ENCODE measurements at regions of chr1 and their contacts with region 1.

Region 1: GRCh38 chr1:244272471-244273261 is 179.0 kb downstream of the ADSS2 start:
- DNase-seq: peak; percentile 50 to 82 (median 72)
- H3K4me3 ChIP-seq: peak overlapping the region in 12 of 59 donors; percentile 3 to 28 (median 16)
- H3K27ac ChIP-seq: peak overlapping the region in 58 of 59 donors; percentile 16 to 92 (median 81)
- H3K27me3 ChIP-seq: no peaks in the 10 kb centered on the region
- CTCF ChIP-seq: peak; percentile 91 to 100 (median 98)

Region 2: DNA sequence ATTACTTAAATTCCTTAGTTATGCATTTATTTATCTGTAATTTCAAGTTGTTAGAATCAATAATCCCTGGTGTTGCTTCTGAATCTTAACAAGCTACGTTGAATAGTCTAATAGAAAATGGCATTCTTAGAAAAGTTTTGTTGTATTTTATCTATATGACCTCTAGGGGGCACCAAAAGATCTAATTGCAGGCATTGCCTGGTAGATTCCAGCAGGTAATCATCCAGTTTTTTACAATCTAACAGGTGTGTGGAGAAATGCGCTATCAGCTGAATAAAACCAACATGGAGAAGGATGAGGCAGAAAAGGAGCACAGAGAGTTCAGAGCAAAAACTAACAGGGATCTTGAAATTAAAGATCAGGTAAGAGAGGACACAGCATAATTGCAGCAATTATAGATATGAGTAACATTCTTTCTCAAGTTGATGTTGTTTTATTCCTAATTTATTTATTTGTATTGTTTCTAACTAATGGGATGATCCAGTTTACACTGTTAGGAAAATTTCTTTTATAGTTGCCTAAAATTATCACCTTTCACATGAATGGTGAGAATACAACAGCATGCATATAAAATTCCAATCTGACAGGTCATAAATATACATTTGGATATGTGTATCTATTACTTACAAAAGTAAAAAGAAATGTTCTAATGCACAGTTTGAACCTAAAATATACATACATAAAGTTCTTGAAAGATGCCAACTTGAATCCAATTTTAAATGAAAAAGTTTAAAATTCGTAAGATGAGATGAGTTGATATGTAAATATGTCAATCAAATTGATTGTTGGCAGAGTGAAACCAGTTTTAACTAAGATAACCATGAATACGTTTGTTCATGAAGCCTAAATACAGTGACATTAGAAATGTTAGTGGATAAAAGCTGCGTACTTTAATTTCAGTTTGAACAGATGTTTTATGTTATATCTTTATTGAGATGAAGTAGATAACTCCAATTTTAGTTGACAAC is 928.4 kb before region 1 on chr1:
- intact Hi-C with region 1: loop called (anchors 2 to 5 kb)
- DNase-seq: peak in 1 of 10 donors; percentile 25
- H3K4me3 ChIP-seq: no peak overlapping the region
- H3K27ac ChIP-seq: peak overlapping the region in 3 of 59 donors; percentile 3 to 30 (median 13)
- H3K27me3 ChIP-seq: no peaks in the 10 kb centered on the region
- CTCF ChIP-seq: peak; percentile 59 to 95 (median 82)

Region 3: GRCh38 chr1:243708210-243708609 is 564.5 kb before region 1 on chr1:
- intact Hi-C with region 1: loop called (anchors 2 kb)
- DNase-seq: no peak
- H3K4me3 ChIP-seq: no peak overlapping the region
- H3K27ac ChIP-seq: peak overlapping the region in 1 of 59 donors; percentile 12
- H3K27me3 ChIP-seq: no peaks in the 10 kb centered on the region
- CTCF ChIP-seq: peak in 51 of 56 donors; percentile 8 to 67 (median 47)

Region 4: DNA sequence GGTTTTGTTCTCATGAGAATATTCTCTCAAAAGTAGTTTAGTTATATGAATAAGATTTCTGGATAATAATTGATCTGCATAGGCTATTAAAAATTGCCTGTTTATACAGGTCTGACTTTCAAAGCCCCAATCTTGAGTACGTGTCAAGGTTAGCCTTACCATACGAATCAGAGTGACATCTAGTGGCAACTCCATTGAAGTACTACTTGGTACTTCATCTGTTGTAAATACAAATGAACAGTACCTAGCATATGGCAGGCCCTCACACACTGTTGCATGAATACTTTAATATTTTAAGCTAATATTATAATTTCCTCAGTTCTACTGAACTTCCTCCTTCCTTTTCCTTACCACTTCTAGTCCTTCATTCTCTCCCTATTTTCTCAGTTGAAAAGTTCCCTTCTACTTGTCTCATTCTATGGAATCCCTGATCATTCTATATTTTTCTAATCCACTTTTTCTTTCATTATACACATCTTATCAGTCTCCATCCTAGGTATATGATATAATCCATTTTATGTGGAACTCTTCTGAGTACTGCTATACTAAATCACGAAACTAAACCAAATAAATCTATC is 523.9 kb before region 1 on chr1:
- intact Hi-C with region 1: loop called in 1 of 2 experiments (anchors 5 kb)
- DNase-seq: peak in 1 of 10 donors; percentile 46
- H3K4me3 ChIP-seq: no peak overlapping the region
- H3K27ac ChIP-seq: peak overlapping the region in 5 of 59 donors; percentile 1 to 35 (median 9)
- H3K27me3 ChIP-seq: no peaks in the 10 kb centered on the region
- CTCF ChIP-seq: peak; percentile 66 to 96 (median 86)

Region 5: GRCh38 chr1:243850452-243851256 is 422.0 kb before region 1 on chr1:
- intact Hi-C with region 1: loop called (anchors 5 kb)
- DNase-seq: peak; percentile 63 to 84 (median 78)
- H3K4me3 ChIP-seq: peak overlapping the region; percentile 59 to 92 (median 81)
- H3K27ac ChIP-seq: peak overlapping the region; percentile 72 to 100 (median 97)
- H3K27me3 ChIP-seq: no peaks in the 10 kb centered on the region
- CTCF ChIP-seq: peak in 4 of 56 donors; percentile 3 to 20 (median 8)

Region 6: GRCh38 chr1:244154872-244155531 is 117.7 kb before region 1 on chr1:
- intact Hi-C with region 1: loop called in 1 of 2 experiments (anchors 10 kb)
- DNase-seq: peak; percentile 31 to 83 (median 74)
- H3K4me3 ChIP-seq: peak overlapping the region in 42 of 59 donors; percentile 0 to 56 (median 26)
- H3K27ac ChIP-seq: peak overlapping the region in 15 of 59 donors; percentile 4 to 65 (median 25)
- H3K27me3 ChIP-seq: no peaks in the 10 kb centered on the region
- CTCF ChIP-seq: peak in 13 of 56 donors; percentile 8 to 49 (median 18)

Region 7: DNA sequence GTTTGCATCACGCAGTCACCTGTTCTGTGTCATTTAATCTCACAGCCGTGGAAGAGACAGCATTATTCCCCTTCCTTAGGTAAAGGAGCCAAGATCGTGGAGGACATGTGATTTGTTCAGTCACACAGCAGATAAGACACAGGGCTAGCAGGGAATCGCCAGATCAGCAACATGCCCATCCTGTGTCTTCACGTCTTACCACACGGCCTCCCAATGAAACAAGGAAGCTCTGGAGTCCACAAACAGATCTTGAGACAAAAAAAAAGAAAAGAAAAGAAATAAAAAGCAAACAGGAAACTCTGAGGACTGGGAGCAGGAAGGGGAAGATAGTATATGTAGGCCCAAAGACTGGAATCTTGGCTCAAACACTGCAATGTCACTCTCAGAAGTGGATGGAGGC is 23.8 kb after region 1 on chr1:
- intact Hi-C with region 1: loop called in 1 of 2 experiments (anchors 2 kb)
- DNase-seq: peak in 1 of 10 donors; percentile 42
- H3K4me3 ChIP-seq: no peak overlapping the region
- H3K27ac ChIP-seq: peak overlapping the region in 42 of 59 donors; percentile 4 to 72 (median 34)
- H3K27me3 ChIP-seq: no peaks in the 10 kb centered on the region
- CTCF ChIP-seq: no peak

Measured in dorsolateral prefrontal cortex (tissue), 120 donors.